ENCODE measurements at regions of chr6 and their contacts with region 1.

Region 1: GRCh38 chr6:15346315-15346714 is 100.4 kb downstream of the JARID2 start:
- DNase-seq: peak; percentile 14
- H3K4me3 Mint-ChIP-seq: peak overlapping the region; percentile 27
- H3K27ac Mint-ChIP-seq: no peak overlapping the region
- H3K4me1 Mint-ChIP-seq: peaks cover 85% of the 10 kb centered on the region
- H3K27me3 Mint-ChIP-seq: no peaks in the 10 kb centered on the region

Region 2: GRCh38 chr6:15363523-15364400 is 17.4 kb after region 1 on chr6:
- CTCF ChIA-PET with region 1: no interaction called
- intact Hi-C with region 1: loop called (anchors 1 kb)
- DNase-seq: peak; percentile 17
- H3K4me3 Mint-ChIP-seq: no peak overlapping the region
- H3K27ac Mint-ChIP-seq: no peak overlapping the region
- H3K4me1 Mint-ChIP-seq: peaks cover 43% of the 10 kb centered on the region
- H3K27me3 Mint-ChIP-seq: no peaks in the 10 kb centered on the region

Region 3: GRCh38 chr6:16503970-16504415 is 1157.7 kb after region 1 on chr6:
- CTCF ChIA-PET with region 1: no interaction called
- intact Hi-C with region 1: no loop called
- DNase-seq: no peak
- H3K4me3 Mint-ChIP-seq: no peak overlapping the region
- H3K27ac Mint-ChIP-seq: no peak overlapping the region
- H3K4me1 Mint-ChIP-seq: peaks cover 26% of the 10 kb centered on the region
- H3K27me3 Mint-ChIP-seq: no peaks in the 10 kb centered on the region

Measured in activated naive CD4-positive, alpha-beta T cell treated with anti-CD3 and anti-CD28 coated beads for 36 hours (primary cell).